ENCODE measurements at regions of chr2 and their contacts with region 1.

Region 1: GRCh38 chr2:24521975-24522639 is 31.1 kb downstream of the NCOA1 start:
- DNase-seq: no peak
- H3K4me3 Mint-ChIP-seq: no peak overlapping the region
- H3K27ac Mint-ChIP-seq: peak overlapping the region; percentile 66
- H3K4me1 Mint-ChIP-seq: peaks cover 46% of the 10 kb centered on the region
- H3K27me3 Mint-ChIP-seq: no peaks in the 10 kb centered on the region

Region 2: GRCh38 chr2:24490674-24491625 is 31.2 kb before region 1 on chr2 and contains the start of gene NCOA1:
- CTCF ChIA-PET with region 1: interaction called, 4 read pairs
- POLR2A ChIA-PET with region 1: interaction called, 4 read pairs
- intact Hi-C with region 1: loop called (anchors 2 kb)
- DNase-seq: peak; percentile 95
- H3K4me3 Mint-ChIP-seq: peak within 1 kb of the TSS; percentile 83
- H3K27ac Mint-ChIP-seq: peak within 1 kb of the TSS; percentile 91
- H3K4me1 Mint-ChIP-seq: peaks cover 48% of the 10 kb centered on the region
- H3K27me3 Mint-ChIP-seq: no peaks in the 10 kb centered on the region
- total RNA-seq, gene NCOA1: 21.3 to 24.0 TPM

Region 3: GRCh38 chr2:24509425-24509824 is 12.7 kb before region 1 on chr2:
- CTCF ChIA-PET with region 1: interaction called, 6 read pairs
- POLR2A ChIA-PET with region 1: interaction called, 5 read pairs
- intact Hi-C with region 1: loop called (anchors 1 kb)
- DNase-seq: no peak
- H3K4me3 Mint-ChIP-seq: no peak overlapping the region
- H3K27ac Mint-ChIP-seq: no peak overlapping the region
- H3K4me1 Mint-ChIP-seq: peaks cover 70% of the 10 kb centered on the region
- H3K27me3 Mint-ChIP-seq: no peaks in the 10 kb centered on the region

Region 4: GRCh38 chr2:24543252-24543651 is 21.1 kb after region 1 on chr2:
- CTCF ChIA-PET with region 1: no interaction called
- POLR2A ChIA-PET with region 1: no interaction called
- intact Hi-C with region 1: loop called (anchors 2 kb)
- DNase-seq: no peak
- H3K4me3 Mint-ChIP-seq: no peak overlapping the region
- H3K27ac Mint-ChIP-seq: no peak overlapping the region
- H3K4me1 Mint-ChIP-seq: peaks cover 27% of the 10 kb centered on the region
- H3K27me3 Mint-ChIP-seq: no peaks in the 10 kb centered on the region

Region 5: GRCh38 chr2:24702800-24703199 is 180.7 kb after region 1 on chr2:
- CTCF ChIA-PET with region 1: no interaction called
- POLR2A ChIA-PET with region 1: no interaction called
- intact Hi-C with region 1: loop called (anchors 2 kb)
- DNase-seq: no peak
- H3K4me3 Mint-ChIP-seq: no peak overlapping the region
- H3K27ac Mint-ChIP-seq: peak overlapping the region; percentile 81
- H3K4me1 Mint-ChIP-seq: peaks cover 18% of the 10 kb centered on the region
- H3K27me3 Mint-ChIP-seq: no peaks in the 10 kb centered on the region